PC-9 (cell line): ENCODE measurements at regions of chr2 and their contacts with region 1.

Region 1: DNA sequence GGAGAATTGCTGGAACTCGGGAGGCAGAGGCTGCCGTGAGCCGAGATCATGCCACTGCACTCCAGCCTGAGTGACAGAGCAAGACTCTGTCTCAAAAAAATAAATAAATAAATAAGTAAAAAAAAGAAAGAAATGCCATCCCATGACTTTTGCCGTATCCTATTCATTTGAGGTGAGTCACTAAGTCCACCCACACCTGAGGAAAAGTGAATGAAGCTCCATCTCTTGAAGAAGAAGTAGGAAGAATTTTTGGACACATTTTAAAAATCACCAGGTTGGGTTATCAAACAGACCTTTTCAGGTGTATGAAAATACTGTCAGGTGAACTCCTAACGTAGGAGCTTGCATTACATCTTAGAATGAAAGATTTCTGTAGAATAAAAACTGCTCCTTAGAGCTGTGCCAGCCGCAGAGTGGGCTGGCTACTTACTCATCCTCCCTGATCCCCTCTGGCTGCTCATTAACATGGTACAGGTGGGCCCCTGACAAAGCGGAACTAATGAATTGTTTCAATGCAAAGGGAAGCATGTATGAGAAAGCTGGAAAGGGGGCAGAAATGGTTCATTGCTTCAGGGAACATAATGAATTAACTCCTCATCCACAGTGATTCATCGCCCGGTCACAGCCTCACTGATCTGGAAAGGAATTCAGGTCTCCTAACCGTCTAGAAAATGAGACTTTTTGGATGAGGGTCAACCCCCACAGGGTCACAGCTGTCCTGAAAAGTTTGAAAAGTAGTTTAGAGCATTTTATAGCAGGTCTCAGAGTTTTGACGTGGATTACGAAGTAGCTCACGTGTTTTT is 191.4 kb downstream of the SPP2 start:
- DNase-seq: peak; percentile 68 to 95
- H3K4me3 ChIP-seq: peak overlapping the region; percentile 36; the same call in 1 of the 2 replicates
- H3K27ac ChIP-seq: peak overlapping the region; percentile 91
- H3K4me1 ChIP-seq: peaks cover 68% of the 10 kb centered on the region
- H3K27me3 ChIP-seq: no peaks in the 10 kb centered on the region
- CTCF ChIP-seq: no peak

Region 2: GRCh38 chr2:234203135-234203984 is 38.5 kb before region 1 on chr2:
- CTCF ChIA-PET with region 1: interaction called, 4 read pairs
- POLR2A ChIA-PET with region 1: interaction called, 5 read pairs
- intact Hi-C with region 1: loop called (anchors 2 kb)
- DNase-seq: peak; percentile 63 to 98
- H3K4me3 ChIP-seq: peak overlapping the region; percentile 1; the same call in 1 of the 2 replicates
- H3K27ac ChIP-seq: peak overlapping the region; percentile 91
- H3K4me1 ChIP-seq: peaks cover 44% of the 10 kb centered on the region
- H3K27me3 ChIP-seq: no peaks in the 10 kb centered on the region
- CTCF ChIP-seq: no peak

Region 3: GRCh38 chr2:234269769-234270204 is 27.9 kb after region 1 on chr2:
- CTCF ChIA-PET with region 1: interaction called, 10 read pairs
- POLR2A ChIA-PET with region 1: no interaction called
- intact Hi-C with region 1: no loop called
- DNase-seq: peak; percentile 52 to 80
- H3K4me3 ChIP-seq: peak overlapping the region; percentile 13; the same call in 1 of the 2 replicates
- H3K27ac ChIP-seq: peak overlapping the region; percentile 67
- H3K4me1 ChIP-seq: peaks cover 28% of the 10 kb centered on the region
- H3K27me3 ChIP-seq: no peaks in the 10 kb centered on the region
- CTCF ChIP-seq: no peak